A549 (cell line): ENCODE measurements at regions of chr3 and their contacts with region 1.

Region 1: GRCh38 chr3:50245831-50246516 is 10.0 kb downstream of the GNAI2 start:
- DNase-seq: peak; percentile 61 to 78
- ATAC-seq: peak; percentile 86 to 94
- H3K4me3 ChIP-seq: peak overlapping the region; percentile 41
- H3K27ac ChIP-seq: peak overlapping the region; percentile 89 to 95
- H3K4me1 ChIP-seq: peaks cover 35% of the 10 kb centered on the region
- CTCF ChIP-seq: peak; percentile 90
- EP300 ChIP-seq: no peak
- POLR2A ChIP-seq: no peak
- RAD21 ChIP-seq: peak; percentile 59 to 64

Region 2: GRCh38 chr3:50235716-50236496 is 10.1 kb before region 1 on chr3 and contains the start of gene GNAI2:
- CTCF ChIA-PET with region 1: interaction called, 219 read pairs
- POLR2A ChIA-PET with region 1: interaction called, 16 read pairs
- DNase-seq: peak; percentile 93 to 94
- ATAC-seq: peak; percentile 95 to 98
- H3K4me3 ChIP-seq: peak within 1 kb of the TSS; percentile 69
- H3K27ac ChIP-seq: peak within 1 kb of the TSS; percentile 76 to 91
- H3K4me1 ChIP-seq: peaks cover 30% of the 10 kb centered on the region
- CTCF ChIP-seq: no peak
- EP300 ChIP-seq: no peak
- POLR2A ChIP-seq: peak; percentile 84
- RAD21 ChIP-seq: no peak
- polyA plus RNA-seq, gene GNAI2: 67.0 and 67.8 TPM in 2 replicates

Region 3: DNA sequence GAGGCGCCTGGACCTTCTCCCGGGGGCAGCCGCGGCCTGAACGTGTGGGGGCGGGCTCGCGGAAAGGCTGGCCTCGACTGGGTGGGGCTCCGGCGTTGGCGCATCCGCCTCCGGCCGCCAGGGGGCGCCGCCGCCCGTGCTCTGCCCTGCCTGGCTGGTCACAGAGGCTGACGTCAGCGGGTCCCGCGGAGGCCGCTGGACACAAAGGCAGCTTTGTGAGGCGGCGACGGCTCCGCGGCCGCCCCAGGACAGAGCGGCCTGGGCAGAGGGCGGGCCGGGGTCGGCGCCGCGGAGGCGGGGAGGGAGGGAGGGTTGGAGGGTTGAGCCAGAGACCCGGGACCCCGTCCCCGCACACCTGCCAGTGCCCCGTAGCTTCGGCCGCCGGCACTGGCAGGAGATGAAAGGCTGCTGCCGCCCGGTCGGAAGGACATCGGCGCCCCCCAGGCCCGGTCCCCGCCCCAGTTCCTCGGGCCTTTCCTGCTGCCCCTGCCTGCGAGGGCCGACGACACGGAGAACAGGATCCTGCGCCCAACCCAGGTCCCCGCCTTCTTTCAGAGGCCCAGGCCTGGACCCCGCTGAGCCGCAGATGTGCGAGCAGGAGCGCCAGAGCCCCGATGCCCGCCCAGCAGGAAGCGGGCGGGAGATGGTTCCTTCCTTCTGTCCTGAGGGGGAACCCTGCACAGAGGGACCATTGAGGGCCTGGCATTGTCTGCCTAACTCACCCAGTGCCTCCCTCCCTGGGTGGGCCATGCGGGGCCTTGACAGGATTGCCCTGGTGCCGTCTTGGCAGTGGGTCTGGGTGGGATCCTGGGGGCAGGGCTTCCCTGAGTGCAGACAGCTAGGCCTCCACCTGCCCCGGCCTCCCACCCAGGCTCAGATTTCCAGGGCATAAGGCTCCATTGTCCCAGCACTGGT is 14.3 kb after region 1 on chr3:
- CTCF ChIA-PET with region 1: interaction called, 64 read pairs
- POLR2A ChIA-PET with region 1: interaction called, 9 read pairs
- DNase-seq: peak; percentile 68 to 85
- ATAC-seq: peak; percentile 83 to 88
- H3K4me3 ChIP-seq: peak overlapping the region; percentile 85
- H3K27ac ChIP-seq: peak overlapping the region; percentile 94 to 99
- H3K4me1 ChIP-seq: peaks cover 34% of the 10 kb centered on the region
- CTCF ChIP-seq: peak; percentile 83
- EP300 ChIP-seq: no peak
- POLR2A ChIP-seq: peak; percentile 50
- RAD21 ChIP-seq: peak; percentile 57 to 77

Region 4: GRCh38 chr3:50272911-50273693 is 27.1 kb after region 1 on chr3:
- CTCF ChIA-PET with region 1: interaction called, 22 read pairs
- POLR2A ChIA-PET with region 1: interaction called, 4 read pairs
- DNase-seq: peak; percentile 74 to 77
- ATAC-seq: peak; percentile 43 to 75
- H3K4me3 ChIP-seq: no peak overlapping the region
- H3K27ac ChIP-seq: 0 out of 6 replicates have a peak overlapping the region, but pooled peaks of 1 of the 2 experiments have one; percentile 37
- H3K4me1 ChIP-seq: peaks cover 41% of the 10 kb centered on the region
- CTCF ChIP-seq: peak; percentile 78
- EP300 ChIP-seq: no peak
- POLR2A ChIP-seq: no peak
- RAD21 ChIP-seq: peak; percentile 91

Region 5: DNA sequence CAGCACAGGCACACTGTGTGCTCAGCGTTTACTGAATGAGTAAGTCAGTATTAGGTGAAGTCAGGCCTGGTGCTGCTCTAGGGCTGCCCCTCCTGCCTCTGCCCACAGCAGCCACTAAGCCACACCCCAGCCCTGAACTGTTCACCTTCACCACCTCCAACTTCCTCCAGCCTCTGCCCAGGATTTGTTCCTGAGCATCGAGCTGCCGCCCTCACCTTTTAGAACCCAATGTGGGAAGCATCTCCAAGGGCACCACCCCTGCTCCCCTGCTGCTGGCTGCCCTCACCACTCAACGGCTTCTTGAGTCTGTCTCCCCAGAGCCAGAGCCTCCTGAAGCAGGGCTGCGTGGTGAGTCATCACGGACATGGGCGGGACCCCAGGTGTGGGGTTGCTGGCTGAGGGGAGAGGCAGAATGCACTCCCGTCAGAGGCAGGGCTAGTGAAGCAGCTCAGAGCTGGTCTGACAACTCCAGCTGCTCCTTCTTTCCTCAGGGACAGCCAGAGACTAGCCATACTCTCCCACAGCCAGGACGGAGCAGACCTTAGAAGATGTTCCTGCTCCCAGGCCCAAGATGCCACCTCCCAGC is 70.8 kb after region 1 on chr3:
- CTCF ChIA-PET with region 1: no interaction called
- POLR2A ChIA-PET with region 1: no interaction called
- DNase-seq: peak in 1 of 2 experiments; percentile 73
- ATAC-seq: peak; percentile 55 to 62
- H3K4me3 ChIP-seq: no peak overlapping the region
- H3K27ac ChIP-seq: peak overlapping the region; percentile 39 to 78; a peak in 4 of 6 replicates
- H3K4me1 ChIP-seq: peaks cover 26% of the 10 kb centered on the region
- CTCF ChIP-seq: no peak
- EP300 ChIP-seq: no peak
- POLR2A ChIP-seq: no peak
- RAD21 ChIP-seq: no peak